ENCODE measurements at regions of chr2 and their contacts with region 1.

Region 1: GRCh38 chr2:28199995-28200679 is 192.5 kb upstream of the FOSL2 start:
- DNase-seq: no peak

Region 2: DNA sequence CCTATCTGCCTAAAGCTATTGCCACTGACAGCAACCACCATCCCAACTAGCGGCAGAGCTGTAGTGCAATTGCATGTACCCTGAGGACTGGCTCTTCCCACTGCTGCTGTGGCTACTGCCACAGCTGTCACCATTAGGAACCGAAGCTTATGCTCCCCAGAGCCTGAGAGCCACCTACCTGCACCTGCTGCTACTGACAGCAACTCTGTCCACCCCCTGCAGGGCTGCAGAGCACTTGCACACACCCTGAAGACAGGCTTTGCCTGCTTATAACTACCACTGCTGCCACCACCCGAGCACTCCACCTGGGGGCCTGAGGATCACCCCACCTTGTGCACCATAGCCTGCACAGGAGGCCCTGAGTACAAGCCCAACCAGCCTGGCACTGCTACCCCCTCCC is 25.1 kb before region 1 on chr2:
- intact Hi-C with region 1: loop called in 1 of 2 experiments (anchors 1 kb)
- DNase-seq: no peak

Region 3: DNA sequence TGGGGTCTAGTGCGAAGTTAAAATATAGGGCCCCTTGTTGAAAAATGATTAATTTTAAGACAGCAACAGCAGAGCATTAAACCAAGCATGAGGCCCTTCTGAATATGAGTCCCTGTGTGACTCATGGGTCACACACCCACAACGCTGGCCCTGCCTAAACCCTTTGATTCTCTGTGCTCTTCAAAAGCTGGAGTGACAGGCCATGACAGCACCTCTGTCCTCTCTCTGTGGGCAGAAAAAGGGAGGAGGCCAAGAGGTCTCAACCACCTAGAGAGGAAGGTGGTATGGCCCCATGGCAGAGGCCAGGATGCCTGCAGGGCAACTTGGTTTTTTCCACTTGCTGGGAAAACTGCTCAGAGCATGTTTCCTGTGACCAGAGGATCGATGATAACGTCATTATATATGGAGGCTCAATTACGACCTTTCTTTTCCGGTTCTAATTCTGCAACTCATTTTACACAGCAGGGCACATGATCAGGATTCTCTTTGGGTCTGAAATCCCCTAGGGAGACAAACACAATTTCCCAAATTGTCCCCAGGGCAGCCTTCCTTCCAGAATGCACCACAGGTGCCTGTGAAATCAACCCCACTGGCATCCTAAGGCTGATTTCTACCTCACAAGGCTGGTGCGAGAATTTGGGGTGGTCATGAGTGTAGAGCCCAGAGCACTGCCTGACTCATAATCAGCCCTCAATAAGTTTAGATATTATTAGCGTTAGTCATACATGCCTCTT is 449.5 kb after region 1 on chr2:
- intact Hi-C with region 1: no loop called
- DNase-seq: no peak